Gastrocnemius medialis (tissue), 4 donors: ENCODE measurements at regions of chr2 and their contacts with region 1.

Region 1: GRCh38 chr2:205776139-205776538 is 93.8 kb downstream of the NRP2 start:
- DNase-seq: peak in 1 of 2 donors; percentile 24
- ATAC-seq: no peak
- H3K4me3 ChIP-seq: no peak overlapping the region
- H3K27ac ChIP-seq: no peak overlapping the region
- H3K4me1 ChIP-seq: no peaks in the 10 kb centered on the region
- H3K27me3 ChIP-seq: no peaks in the 10 kb centered on the region
- CTCF ChIP-seq: peak; percentile 46 to 72 (median 66)
- POLR2A ChIP-seq: no peak

Region 2: GRCh38 chr2:205218056-205218455 is 558.1 kb before region 1 on chr2:
- in situ Hi-C with region 1: no loop called
- intact Hi-C with region 1: no loop called
- DNase-seq: no peak
- ATAC-seq: no peak
- H3K4me3 ChIP-seq: no peak overlapping the region
- H3K27ac ChIP-seq: no peak overlapping the region
- H3K4me1 ChIP-seq: no peaks in the 10 kb centered on the region
- H3K27me3 ChIP-seq: no peaks in the 10 kb centered on the region
- CTCF ChIP-seq: no peak
- POLR2A ChIP-seq: no peak

Region 3: DNA sequence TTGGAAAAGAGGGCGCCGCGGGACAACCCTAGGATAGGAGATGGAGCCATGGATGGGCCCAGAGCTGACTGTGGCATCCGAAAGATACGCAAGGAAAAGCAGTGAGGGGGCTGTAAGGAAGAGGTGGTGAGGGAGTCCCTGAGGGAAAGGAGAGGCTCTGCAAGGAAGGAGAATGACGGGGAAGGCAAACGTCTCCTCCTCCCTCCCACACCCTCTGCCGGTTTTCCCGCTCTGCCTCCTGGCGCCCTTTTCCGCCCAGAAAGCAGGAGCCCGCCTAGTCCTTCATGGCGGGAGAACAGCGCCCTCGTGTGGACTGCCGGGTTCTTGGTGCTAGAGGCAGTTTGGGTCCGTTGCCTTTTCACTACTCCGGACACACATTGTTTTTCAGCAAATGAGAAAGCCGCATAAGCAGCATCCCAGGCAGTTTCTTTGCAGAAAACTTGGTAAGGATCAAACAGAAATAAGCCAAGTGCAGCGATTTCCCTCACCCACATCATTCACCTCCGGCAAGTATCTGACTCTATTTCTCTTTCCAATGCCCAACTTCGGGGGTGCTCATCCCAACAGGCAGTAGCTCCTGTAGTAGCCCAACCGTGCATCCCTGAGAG is 109.5 kb after region 1 on chr2:
- in situ Hi-C with region 1: loop called in 3 of 4 experiments (anchors 5 to 25 kb)
- intact Hi-C with region 1: loop called (anchors 1 kb)
- DNase-seq: peak; percentile 26 to 57
- ATAC-seq: peak; percentile 56 to 73
- H3K4me3 ChIP-seq: no peak overlapping the region
- H3K27ac ChIP-seq: no peak overlapping the region
- H3K4me1 ChIP-seq: no peaks in the 10 kb centered on the region
- H3K27me3 ChIP-seq: no peaks in the 10 kb centered on the region
- CTCF ChIP-seq: peak; percentile 71 to 83 (median 75)
- POLR2A ChIP-seq: no peak